Panc1 (cell line): ENCODE measurements at regions of chr10 and their contacts with region 1.

Region 1: DNA sequence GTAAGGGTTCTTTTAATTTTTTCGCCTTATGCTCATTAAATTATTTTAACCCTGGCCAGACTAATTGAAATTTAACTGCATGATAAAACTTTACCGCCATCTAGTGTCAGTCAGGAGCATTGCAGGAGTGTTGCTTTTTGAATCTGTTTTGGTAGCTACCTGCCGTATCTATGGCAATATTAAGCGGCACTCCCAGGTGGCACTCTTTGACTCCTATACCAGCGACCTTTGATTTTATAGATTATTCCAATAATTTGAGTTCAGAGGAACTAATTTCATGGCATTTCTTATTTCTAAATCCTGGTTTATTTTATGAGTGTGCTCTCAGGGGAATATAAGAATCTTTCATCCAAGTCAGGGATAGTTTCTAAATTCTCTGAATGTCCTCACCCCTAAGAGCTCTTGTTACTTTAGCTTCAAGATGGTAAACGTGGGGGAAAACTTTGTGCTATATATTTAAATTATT is 198.9 kb downstream of the REEP3 start:
- DNase-seq: no peak
- ATAC-seq: peak; percentile 56; the same call in 1 of the 2 replicates
- H3K4me3 ChIP-seq: no peak overlapping the region
- H3K27ac ChIP-seq: no peak overlapping the region
- H3K4me1 ChIP-seq: peaks cover 29% of the 10 kb centered on the region
- H3K27me3 ChIP-seq: no peaks in the 10 kb centered on the region; the same call in 1 of the 2 replicates
- CTCF ChIP-seq: peak; percentile 97

Region 2: DNA sequence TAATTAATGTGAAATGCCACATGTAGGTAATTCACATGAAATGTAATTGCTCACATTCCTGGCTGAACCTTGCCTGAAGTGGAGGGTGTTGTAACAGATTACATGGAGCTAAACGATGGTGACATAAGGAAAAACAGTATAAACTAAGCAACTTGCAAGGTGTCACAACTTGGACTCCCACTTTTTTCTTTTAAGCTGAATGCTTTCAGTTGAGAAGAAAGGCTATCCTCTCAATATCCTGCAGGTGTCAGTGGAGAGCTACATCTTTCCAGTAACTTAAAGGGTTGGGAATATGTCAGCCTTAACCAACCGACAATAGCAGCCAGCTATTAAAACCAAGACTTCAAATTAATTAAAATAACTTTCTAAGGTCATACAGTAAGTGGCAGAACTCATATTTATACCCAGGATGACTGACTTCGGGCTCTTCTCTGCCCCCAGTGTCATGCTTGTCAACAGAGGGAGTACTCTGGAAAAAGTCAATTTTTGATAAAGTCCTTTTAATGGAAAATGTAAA is 553.3 kb before region 1 on chr10:
- CTCF ChIA-PET with region 1: interaction called, 22 read pairs
- POLR2A ChIA-PET with region 1: no interaction called
- in situ Hi-C with region 1: no loop called
- intact Hi-C with region 1: loop called (anchors 5 kb)
- DNase-seq: peak; percentile 57
- ATAC-seq: peak; percentile 82
- H3K4me3 ChIP-seq: no peak overlapping the region
- H3K27ac ChIP-seq: no peak overlapping the region
- H3K4me1 ChIP-seq: no peaks in the 10 kb centered on the region
- H3K27me3 ChIP-seq: no peaks in the 10 kb centered on the region
- CTCF ChIP-seq: peak; percentile 83

Region 3: GRCh38 chr10:63197344-63198106 is 522.6 kb before region 1 on chr10:
- CTCF ChIA-PET with region 1: no interaction called
- POLR2A ChIA-PET with region 1: no interaction called
- in situ Hi-C with region 1: loop called (anchors 25 kb)
- intact Hi-C with region 1: no loop called
- DNase-seq: no peak
- ATAC-seq: no peak
- H3K4me3 ChIP-seq: no peak overlapping the region
- H3K27ac ChIP-seq: no peak overlapping the region
- H3K4me1 ChIP-seq: no peaks in the 10 kb centered on the region
- H3K27me3 ChIP-seq: no peaks in the 10 kb centered on the region
- CTCF ChIP-seq: no peak

Region 4: DNA sequence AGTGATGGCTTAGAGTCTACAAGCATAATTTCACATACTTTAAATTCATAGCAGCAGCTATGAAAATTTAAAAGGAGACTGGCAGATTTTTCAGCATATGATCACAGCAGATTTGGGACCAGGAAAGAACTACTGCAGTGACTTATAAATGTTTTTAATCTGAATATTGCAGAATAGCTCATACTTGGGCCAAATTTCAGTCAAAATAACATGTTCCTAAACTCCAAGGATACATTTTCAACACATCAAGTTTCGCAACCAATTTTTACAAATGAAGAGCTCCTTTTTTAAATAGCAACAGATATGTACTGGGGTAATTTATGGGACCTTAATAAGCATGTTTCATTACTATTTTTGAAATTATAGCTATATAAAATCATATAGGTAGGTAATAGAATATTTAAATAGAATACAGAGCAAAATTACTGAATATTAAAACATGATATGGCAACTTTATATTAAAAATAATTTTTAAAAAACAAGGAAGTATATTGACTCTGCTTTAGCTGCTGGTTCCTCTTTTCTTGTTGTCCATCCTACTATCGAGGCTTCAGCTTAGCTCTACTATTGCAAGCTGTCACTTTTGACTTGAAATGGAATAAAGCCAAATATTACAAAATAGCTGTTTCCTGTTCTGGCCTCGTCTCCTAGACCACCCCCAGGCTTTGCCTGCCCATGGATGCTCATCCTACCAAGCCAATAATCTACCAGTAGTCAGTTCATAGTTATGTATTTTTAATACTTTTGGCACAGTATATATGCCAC is 463.9 kb before region 1 on chr10:
- CTCF ChIA-PET with region 1: no interaction called
- POLR2A ChIA-PET with region 1: interaction called, 11 read pairs
- in situ Hi-C with region 1: no loop called
- intact Hi-C with region 1: no loop called
- DNase-seq: no peak
- ATAC-seq: no peak
- H3K4me3 ChIP-seq: no peak overlapping the region
- H3K27ac ChIP-seq: no peak overlapping the region
- H3K4me1 ChIP-seq: peaks cover 19% of the 10 kb centered on the region; the same call in 1 of the 2 replicates
- H3K27me3 ChIP-seq: no peaks in the 10 kb centered on the region
- CTCF ChIP-seq: no peak

Region 5: DNA sequence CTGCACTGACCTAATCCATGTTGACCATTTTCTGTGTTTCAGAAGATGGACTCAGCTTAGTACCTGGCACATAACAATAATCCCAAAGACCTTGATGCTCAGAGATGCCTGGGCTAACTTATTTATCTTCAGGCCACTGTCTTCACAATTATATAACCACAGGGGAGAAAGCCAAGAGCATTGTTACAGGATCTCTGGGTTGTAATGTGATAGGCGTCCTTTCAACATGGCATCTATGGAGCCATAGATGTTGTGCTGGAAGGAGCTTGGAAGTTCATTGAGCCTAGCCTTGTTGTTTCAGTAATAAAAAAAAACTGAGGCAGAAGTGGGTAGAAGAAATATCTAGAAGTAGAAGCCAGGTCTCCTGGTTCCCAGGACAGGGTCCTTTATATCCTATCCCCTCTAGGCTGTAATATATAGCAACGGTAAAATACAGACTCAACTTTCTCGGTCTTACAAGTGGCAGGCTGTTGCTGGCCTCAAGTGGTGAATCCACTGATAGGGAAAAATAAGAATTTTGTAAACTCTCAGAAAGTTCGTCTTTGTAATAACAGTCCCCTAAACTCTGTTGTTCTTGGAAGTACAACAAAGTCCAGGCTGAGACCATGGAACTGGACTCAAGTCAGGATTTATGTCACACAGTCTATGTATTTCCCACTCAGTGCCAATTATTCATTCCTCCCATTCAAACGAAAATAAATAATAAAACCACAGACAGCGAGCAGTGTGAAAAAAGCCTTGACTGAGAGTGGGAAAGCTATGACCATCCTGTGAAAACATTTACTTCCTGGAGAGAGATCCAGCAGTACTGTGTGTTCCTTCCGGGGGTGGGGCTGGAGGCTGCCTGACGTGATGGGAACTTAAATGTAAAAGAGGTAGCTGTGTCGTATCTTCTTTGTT is 78.7 kb after region 1 on chr10:
- CTCF ChIA-PET with region 1: no interaction called
- POLR2A ChIA-PET with region 1: no interaction called
- in situ Hi-C with region 1: no loop called
- intact Hi-C with region 1: no loop called
- DNase-seq: peak; percentile 20
- ATAC-seq: no peak; the same call in 1 of the 2 replicates
- H3K4me3 ChIP-seq: no peak overlapping the region
- H3K27ac ChIP-seq: no peak overlapping the region
- H3K4me1 ChIP-seq: no peaks in the 10 kb centered on the region
- H3K27me3 ChIP-seq: peaks cover 9% of the 10 kb centered on the region; the same call in 1 of the 2 replicates
- CTCF ChIP-seq: no peak

Region 6: GRCh38 chr10:64286533-64286932 is 566.4 kb after region 1 on chr10:
- CTCF ChIA-PET with region 1: no interaction called
- POLR2A ChIA-PET with region 1: no interaction called
- in situ Hi-C with region 1: no loop called
- intact Hi-C with region 1: no loop called
- DNase-seq: no peak
- ATAC-seq: no peak
- H3K4me3 ChIP-seq: no peak overlapping the region
- H3K27ac ChIP-seq: no peak overlapping the region
- H3K4me1 ChIP-seq: no peaks in the 10 kb centered on the region
- H3K27me3 ChIP-seq: no peaks in the 10 kb centered on the region
- CTCF ChIP-seq: no peak